ENCODE measurements at regions of chr2 and their contacts with region 1.

Region 1: DNA sequence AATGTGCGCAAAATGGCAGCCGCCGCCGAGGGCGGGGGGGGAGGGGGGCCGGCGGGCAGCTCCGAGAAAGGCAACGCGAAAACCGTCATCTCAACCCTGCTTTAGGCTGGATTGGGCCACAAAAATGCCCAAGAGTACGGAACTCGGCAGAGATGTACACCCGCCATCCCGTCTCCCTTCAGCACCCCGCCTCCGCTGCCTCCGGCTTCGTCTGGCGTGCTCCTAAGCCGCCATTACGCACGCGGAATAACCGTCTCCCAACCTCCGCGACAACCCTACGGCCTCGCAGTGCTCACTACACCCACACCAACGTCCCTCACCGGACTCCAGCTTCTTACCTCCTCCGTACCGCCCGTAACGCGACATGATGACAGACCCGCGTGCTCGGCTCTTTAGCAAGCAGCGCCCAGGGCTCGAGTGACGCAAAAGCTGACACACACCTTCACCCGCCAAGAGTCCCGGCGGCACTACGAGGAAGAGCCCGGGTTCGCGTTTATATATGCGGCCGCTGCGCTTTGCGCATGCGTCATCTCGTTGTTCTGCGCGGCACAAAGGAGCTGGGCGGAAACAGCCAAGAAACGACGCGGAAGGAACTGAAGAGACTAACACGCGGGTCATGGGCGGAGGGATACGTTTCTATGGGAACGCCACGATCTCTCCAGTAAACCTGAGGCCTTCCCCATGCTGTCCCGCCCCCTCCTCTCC is at the start of gene SRSF7:
- DNase-seq: peak; percentile 94 to 99 (median 98)
- ATAC-seq: peak; percentile 71 to 75
- H3K4me3 Mint-ChIP-seq: peak within 1 kb of the TSS; percentile 97 to 100 (median 99)
- H3K27ac Mint-ChIP-seq: peak within 1 kb of the TSS; percentile 96 to 100 (median 100)
- H3K4me1 Mint-ChIP-seq: peaks cover 33 to 63% (median 56%) of the 10 kb centered on the region in 4 donors
- H3K27me3 Mint-ChIP-seq: peaks cover 0 to 9% (median 0%) of the 10 kb centered on the region in 5 donors
- polyA plus RNA-seq, gene SRSF7: 164 to 172 (median 169) TPM

Region 2: GRCh38 chr2:37925063-37925897 is 825.8 kb before region 1 on chr2 and contains the start of gene RMDN2:
- POLR2A ChIA-PET with region 1: interaction called, 10 read pairs
- DNase-seq: peak; percentile 58 to 89 (median 78)
- ATAC-seq: peak; percentile 82 to 84
- H3K4me3 Mint-ChIP-seq: peak within 1 kb of the TSS; percentile 89 to 99 (median 94)
- H3K27ac Mint-ChIP-seq: peak within 1 kb of the TSS; percentile 90 to 99 (median 96)
- H3K4me1 Mint-ChIP-seq: peaks cover 10 to 44% (median 19%) of the 10 kb centered on the region in 4 donors
- H3K27me3 Mint-ChIP-seq: peaks cover 0 to 3% (median 0%) of the 10 kb centered on the region in 5 donors
- polyA plus RNA-seq, gene RMDN2: 5.8 to 6.7 (median 6.4) TPM

Region 3: DNA sequence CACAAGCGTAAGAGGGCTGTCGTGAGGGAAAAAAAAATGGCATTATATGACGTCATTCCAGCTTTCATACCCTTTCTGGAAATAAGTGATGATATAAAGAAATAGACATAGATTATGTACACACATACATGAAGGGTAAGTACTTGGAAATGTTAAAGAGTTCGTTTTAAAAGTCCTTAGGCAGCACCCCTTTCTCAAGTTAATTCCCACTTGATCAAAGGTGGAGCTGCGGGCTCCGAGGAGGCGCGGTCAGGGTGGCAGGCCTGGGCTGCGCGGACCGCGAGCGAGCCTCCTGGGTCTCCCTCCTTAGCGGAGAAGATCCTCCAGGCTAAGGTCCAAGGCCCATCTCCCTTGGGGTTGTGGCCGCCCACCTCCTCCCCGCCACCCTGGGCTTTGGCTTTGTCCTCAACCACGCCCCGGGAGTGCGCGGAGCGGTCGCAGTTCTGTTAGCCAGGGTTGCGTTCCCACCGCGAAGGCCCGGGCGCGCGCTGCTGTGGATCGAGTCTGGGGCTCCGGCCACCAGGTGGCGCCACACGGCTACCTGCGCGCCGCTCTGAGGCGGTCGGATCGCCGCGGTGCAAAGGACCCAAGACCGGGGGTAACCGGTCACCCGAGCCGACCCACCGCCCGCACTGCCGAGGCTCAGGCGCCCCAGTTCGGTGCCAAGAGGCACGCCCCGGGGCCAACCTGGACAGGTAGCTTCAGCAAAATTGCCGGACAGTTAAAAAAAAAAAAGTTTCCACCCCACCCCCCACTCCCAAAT is 215.1 kb before region 1 on chr2:
- POLR2A ChIA-PET with region 1: interaction called, 10 read pairs
- DNase-seq: peak; percentile 40 to 84 (median 72)
- ATAC-seq: peak; percentile 97 to 98
- H3K4me3 Mint-ChIP-seq: peak overlapping the region; percentile 46 to 68 (median 56)
- H3K27ac Mint-ChIP-seq: no peak overlapping the region
- H3K4me1 Mint-ChIP-seq: peaks cover 0 to 9% (median 2%) of the 10 kb centered on the region in 4 donors
- H3K27me3 Mint-ChIP-seq: peaks cover 9 to 11% (median 9%) of the 10 kb centered on the region in 5 donors

Region 4: DNA sequence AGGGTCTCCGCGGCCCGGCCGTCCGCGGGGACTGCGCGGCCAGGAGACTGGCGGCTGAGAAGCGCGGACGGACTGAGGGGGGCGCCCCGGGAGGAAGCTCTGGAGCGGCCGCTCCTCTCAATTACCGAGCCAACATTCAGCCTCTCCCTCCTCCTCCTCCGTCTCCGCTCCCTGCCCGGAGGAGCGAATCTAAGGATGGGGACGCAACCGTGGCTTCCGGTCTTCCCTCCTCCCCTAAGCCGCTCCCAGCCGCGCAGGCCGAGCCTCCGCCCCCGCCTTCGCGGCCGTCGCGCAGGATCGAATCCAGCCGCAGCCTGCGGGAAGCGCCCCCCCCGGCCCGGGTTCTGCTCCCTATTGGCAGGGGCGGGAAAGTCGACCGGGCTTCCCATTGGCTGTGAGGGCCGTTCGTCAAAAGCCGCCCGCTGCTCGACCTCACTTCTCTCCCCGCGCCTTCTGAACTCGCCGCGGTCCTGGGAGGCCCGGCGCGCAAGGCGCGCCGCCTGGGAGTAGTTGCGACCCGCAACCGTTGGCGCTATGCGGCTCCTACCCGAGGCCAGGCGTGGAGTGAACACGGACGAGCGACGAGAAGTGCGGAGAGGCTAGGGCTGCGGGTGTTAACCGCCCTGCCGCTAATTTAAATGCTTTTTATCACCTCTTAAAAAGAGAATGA is 148.2 kb before region 1 on chr2 and contains the start of gene HNRNPLL:
- POLR2A ChIA-PET with region 1: interaction called, 49 read pairs
- DNase-seq: peak; percentile 85 to 95 (median 89)
- ATAC-seq: peak; percentile 85 to 87
- H3K4me3 Mint-ChIP-seq: peak within 1 kb of the TSS; percentile 84 to 98 (median 96)
- H3K27ac Mint-ChIP-seq: peak within 1 kb of the TSS; percentile 66 to 94 (median 91)
- H3K4me1 Mint-ChIP-seq: peaks cover 15 to 47% (median 41%) of the 10 kb centered on the region in 4 donors
- H3K27me3 Mint-ChIP-seq: no peaks in the 10 kb centered on the region
- polyA plus RNA-seq, gene HNRNPLL: 8.0 to 13.1 (median 11.5) TPM

Region 5: DNA sequence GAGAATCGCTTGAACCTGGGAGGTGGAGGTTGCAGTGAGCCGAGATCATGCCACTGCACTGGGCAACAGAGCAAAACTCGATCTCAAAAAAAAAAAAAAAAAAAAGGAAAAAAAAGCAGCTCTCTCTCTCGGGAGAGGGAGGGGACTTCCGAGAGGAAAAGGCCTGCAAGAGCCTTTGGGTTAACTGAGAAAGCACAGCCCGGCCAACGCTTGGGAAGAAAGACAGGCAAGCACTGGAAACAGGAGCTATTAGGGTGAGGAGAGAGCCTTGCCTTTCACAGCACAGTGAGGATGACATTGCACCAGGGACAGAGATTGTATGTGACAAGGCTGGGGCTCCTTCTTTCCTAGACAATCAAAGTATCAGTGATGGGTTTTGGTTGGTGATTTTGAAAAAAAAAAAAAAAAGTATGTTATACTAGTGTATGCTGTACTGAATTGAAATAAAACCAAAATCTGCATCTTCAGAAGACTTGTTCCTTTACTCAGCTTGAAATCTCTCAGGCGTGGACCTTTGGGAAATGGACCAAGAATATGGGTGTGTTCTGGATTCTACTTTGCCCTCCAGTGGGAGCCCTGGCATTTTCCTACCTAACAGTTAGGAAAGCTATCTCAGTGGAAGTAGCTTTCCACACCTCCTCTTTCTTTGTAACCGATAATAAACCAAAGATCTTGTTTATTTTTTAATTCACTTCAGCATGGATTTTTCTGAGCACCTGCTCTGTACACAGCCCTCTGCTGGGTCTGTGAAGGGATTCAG is 16.6 kb before region 1 on chr2:
- POLR2A ChIA-PET with region 1: interaction called, 29 read pairs
- DNase-seq: no peak
- ATAC-seq: no peak
- H3K4me3 Mint-ChIP-seq: no peak overlapping the region
- H3K27ac Mint-ChIP-seq: peak overlapping the region in 5 of 10 donors; percentile 44 to 79 (median 54)
- H3K4me1 Mint-ChIP-seq: peaks cover 1 to 18% (median 8%) of the 10 kb centered on the region in 4 donors
- H3K27me3 Mint-ChIP-seq: no peaks in the 10 kb centered on the region

Region 6: DNA sequence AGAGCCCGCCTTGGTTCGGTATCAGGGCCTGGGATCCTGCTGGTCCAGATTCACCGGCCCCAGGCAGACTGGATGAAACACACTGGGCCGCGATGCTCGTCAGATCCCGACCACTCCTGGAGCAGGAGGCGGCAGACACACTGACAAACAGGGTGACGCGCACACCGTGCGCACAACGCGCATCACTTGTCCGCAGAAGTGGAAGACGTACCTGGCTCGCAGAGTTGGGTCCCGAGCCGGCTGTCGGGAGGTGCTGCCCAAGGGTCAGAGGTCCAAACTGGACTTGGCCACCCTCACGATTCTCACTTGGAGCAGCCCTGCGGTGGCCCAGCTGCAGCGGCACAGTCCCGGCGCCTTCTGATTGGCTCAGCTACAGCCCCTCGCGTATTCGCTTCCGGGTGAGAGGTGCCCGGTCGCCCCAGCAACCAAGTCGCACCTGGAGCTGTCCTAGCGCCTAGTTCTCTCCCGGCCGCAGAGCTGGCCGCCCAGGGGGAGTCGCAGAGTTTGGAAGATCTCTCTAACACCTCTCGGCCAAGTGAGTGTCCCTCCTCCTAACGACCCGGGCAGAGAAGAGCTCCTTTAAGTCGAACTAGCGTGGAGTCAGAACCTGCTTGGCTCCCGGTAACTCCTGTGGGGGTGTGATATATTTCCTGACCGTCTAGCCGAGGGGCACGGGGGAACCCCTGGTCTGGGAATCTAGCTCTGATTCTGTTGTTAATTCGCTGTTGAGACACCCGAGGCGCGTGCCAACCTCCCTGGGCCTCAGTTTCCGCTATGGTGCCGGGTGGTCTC is 124.7 kb after region 1 on chr2 and contains the starts of genes DHX57 and MORN2:
- POLR2A ChIA-PET with region 1: interaction called, 11 read pairs
- DNase-seq: peak; percentile 66 to 90 (median 76)
- ATAC-seq: peak; percentile 94 to 98
- H3K4me3 Mint-ChIP-seq: peak within 1 kb of the TSS; percentile 92 to 99 (median 95)
- H3K27ac Mint-ChIP-seq: peak within 1 kb of the TSS; percentile 81 to 99 (median 97)
- H3K4me1 Mint-ChIP-seq: peaks cover 12 to 40% (median 24%) of the 10 kb centered on the region in 4 donors
- H3K27me3 Mint-ChIP-seq: no peaks in the 10 kb centered on the region
- polyA plus RNA-seq, gene DHX57: 4.9 to 5.5 (median 5.0) TPM
- polyA plus RNA-seq, gene MORN2: 9.1 to 10.7 (median 9.7) TPM